CD4-positive, alpha-beta memory T cell (primary cell): ENCODE measurements at regions of chr12 and their contacts with region 1.

Region 1: GRCh38 chr12:108562348-108563135 is at the start of gene ISCU:
- DNase-seq: peak; percentile 97 to 100 (median 99)
- H3K4me3 ChIP-seq: peak within 1 kb of the TSS; percentile 87 to 90
- H3K4me3 Mint-ChIP-seq: peak within 1 kb of the TSS; percentile 100
- H3K27ac ChIP-seq: peak within 1 kb of the TSS; percentile 96
- H3K27ac Mint-ChIP-seq: peak within 1 kb of the TSS; percentile 99 to 100 (median 100)
- H3K4me1 ChIP-seq: peaks cover 65% of the 10 kb centered on the region
- H3K4me1 Mint-ChIP-seq: peaks cover 34 to 79% (median 54%) of the 10 kb centered on the region in 4 donors
- H3K27me3 ChIP-seq: no peaks in the 10 kb centered on the region
- H3K27me3 Mint-ChIP-seq: no peaks in the 10 kb centered on the region
- total RNA-seq, gene ISCU: 182 to 195 TPM

Region 2: GRCh38 chr12:107760809-107761501 is 801.6 kb before region 1 on chr12 and contains the start of gene PRDM4:
- CTCF ChIA-PET with region 1: no interaction called
- POLR2A ChIA-PET with region 1: no interaction called
- intact Hi-C with region 1: loop called (anchors 5 kb)
- DNase-seq: peak; percentile 87 to 94 (median 93)
- H3K4me3 ChIP-seq: peak within 1 kb of the TSS; percentile 77 to 82
- H3K4me3 Mint-ChIP-seq: peak within 1 kb of the TSS; percentile 89 to 95 (median 92)
- H3K27ac ChIP-seq: peak within 1 kb of the TSS; percentile 64
- H3K27ac Mint-ChIP-seq: peak within 1 kb of the TSS; percentile 90 to 98 (median 94)
- H3K4me1 ChIP-seq: peaks cover 41% of the 10 kb centered on the region
- H3K4me1 Mint-ChIP-seq: peaks cover 17 to 45% (median 26%) of the 10 kb centered on the region in 4 donors
- H3K27me3 ChIP-seq: no peaks in the 10 kb centered on the region
- H3K27me3 Mint-ChIP-seq: no peaks in the 10 kb centered on the region
- total RNA-seq, gene PRDM4: 35.8 to 38.3 TPM

Region 3: DNA sequence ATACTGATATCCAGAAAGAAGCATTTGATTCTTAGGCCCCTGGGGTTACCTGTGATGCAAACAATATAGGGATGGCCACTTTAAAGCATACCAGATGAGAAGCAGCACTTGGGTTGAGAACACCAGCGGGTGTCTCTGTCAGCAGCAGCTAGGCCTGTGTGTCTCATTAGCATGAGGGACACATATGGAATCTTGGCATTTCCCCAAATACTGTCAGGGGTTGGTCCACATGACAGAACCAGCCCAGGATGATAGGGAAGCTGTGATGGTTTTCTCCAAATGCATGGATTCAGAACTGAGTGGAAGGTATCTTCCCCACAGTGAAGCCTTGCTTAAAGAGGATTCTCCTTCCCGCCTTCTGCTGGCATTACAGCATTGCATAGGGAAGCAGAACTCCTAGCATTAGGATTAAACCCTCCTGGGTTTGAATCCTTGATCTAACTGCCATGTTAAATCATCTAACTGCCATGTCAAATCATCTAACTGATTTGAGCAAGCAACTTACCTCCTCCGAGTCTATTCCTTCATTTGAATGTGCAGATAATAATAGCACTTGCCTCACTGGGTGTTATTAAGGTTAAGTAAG is 545.0 kb before region 1 on chr12:
- CTCF ChIA-PET with region 1: no interaction called
- POLR2A ChIA-PET with region 1: no interaction called
- intact Hi-C with region 1: no loop called
- DNase-seq: no peak
- H3K4me3 ChIP-seq: no peak overlapping the region
- H3K4me3 Mint-ChIP-seq: no peak overlapping the region
- H3K27ac ChIP-seq: no peak overlapping the region
- H3K27ac Mint-ChIP-seq: no peak overlapping the region
- H3K4me1 ChIP-seq: no peaks in the 10 kb centered on the region
- H3K4me1 Mint-ChIP-seq: no peaks in the 10 kb centered on the region
- H3K27me3 ChIP-seq: no peaks in the 10 kb centered on the region
- H3K27me3 Mint-ChIP-seq: peaks cover 5 to 17% of the 10 kb centered on the region in 2 donors

Region 4: DNA sequence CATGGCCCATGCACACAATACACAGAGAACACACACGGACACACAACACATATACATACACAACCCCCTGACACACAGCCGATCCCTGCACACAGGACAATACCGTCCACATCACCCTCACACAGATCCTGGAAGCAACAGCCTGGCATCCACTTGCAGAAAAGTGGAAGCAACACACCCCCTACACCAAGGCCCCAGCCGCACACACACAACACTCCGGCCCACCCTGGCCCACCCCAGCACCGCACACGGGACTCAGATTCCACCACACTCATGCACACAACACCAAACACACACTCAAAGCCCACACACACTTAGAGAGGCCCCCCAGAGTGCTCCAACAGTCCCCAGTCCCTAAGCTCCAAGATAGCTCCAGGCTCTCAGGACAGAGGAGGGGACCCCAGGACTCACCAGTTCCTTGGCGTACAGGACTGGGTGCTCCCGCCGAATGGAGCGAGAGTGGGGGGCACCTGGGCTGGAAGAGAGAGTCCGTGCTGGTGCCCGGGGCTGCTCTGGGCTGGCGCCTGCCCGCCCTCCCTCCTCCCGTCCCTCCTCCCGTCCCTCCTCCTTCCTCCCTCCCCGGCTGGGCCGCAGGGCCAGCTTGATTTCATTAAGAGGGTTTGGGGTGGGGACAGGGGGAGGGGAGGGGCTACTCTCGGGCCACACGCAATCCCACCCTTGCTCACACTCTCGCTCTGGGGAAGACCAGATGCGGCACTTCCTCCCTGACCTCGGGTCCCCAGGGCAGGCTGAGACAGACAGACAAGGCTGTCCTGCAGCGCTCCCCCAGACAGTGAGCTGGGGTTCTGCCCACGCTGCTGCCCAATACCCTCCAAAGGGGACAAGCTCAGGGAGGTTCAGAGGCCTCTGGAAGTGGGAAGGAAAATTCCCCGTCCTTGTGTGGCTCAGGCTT is 35.3 kb after region 1 on chr12 and contains the start of gene TMEM119:
- CTCF ChIA-PET with region 1: no interaction called
- POLR2A ChIA-PET with region 1: no interaction called
- intact Hi-C with region 1: no loop called
- DNase-seq: no peak
- H3K4me3 ChIP-seq: no peak within 1 kb of the TSS
- H3K4me3 Mint-ChIP-seq: no peak within 1 kb of the TSS
- H3K27ac ChIP-seq: no peak within 1 kb of the TSS
- H3K27ac Mint-ChIP-seq: peak within 1 kb of the TSS in 3 of 7 donors; percentile 28 to 53 (median 46)
- H3K4me1 ChIP-seq: no peaks in the 10 kb centered on the region
- H3K4me1 Mint-ChIP-seq: no peaks in the 10 kb centered on the region
- H3K27me3 ChIP-seq: no peaks in the 10 kb centered on the region
- H3K27me3 Mint-ChIP-seq: no peaks in the 10 kb centered on the region
- total RNA-seq, gene TMEM119: 0.30 to 0.58 TPM

Region 5: GRCh38 chr12:108618079-108618952 is 55.8 kb after region 1 on chr12:
- CTCF ChIA-PET with region 1: interaction called, 339 read pairs
- POLR2A ChIA-PET with region 1: interaction called, 135 read pairs
- intact Hi-C with region 1: loop called (anchors 1 kb)
- DNase-seq: peak; percentile 73 to 78 (median 76)
- H3K4me3 ChIP-seq: no peak overlapping the region
- H3K4me3 Mint-ChIP-seq: peak overlapping the region in 6 of 8 donors; percentile 19 to 59 (median 48)
- H3K27ac ChIP-seq: peak overlapping the region; percentile 78
- H3K27ac Mint-ChIP-seq: peak overlapping the region; percentile 87 to 99 (median 95)
- H3K4me1 ChIP-seq: peaks cover 64% of the 10 kb centered on the region
- H3K4me1 Mint-ChIP-seq: peaks cover 47 to 78% (median 62%) of the 10 kb centered on the region in 4 donors
- H3K27me3 ChIP-seq: no peaks in the 10 kb centered on the region
- H3K27me3 Mint-ChIP-seq: no peaks in the 10 kb centered on the region

Region 6: DNA sequence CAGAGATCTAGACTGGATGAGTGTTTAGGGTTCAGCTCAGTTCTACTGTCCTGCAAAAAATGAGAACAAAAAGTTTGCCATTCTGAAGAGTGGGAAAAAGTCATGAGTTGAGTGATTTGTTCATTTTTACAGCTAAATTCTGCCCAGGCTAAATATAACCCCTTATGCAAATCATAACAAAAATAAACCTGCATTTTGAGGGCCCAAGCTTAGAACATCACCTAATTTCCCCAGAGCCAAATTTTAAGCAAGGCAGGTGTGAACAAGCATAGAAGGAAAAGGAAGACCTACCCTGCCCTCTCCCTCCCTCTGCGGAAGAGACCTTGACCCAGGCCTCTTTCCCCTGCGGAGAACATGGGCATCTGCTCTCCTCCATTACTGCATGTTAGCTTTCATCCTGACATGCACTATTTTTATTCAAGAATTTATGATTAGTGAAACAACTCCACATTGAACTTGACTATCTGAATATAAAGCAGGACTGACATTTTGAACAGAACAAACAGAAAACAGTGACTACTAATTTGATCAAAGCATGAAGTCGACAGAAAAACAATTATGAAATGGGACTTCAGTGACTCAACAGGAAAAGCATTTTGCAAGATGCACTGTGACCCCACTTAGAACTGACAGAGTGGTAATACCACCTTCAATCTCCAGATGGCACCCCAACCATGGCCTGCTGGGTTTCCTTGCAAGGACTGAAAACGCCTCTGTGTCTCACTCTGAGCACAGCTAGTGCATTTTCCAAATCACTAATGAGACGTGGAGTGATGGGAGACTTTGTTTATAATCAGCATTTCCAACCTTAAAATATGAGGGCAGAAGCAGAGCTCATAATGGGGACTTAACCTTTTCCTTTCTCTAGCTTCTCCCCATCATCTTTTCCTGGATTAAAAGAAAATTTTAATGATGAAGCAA is 102.1 kb after region 1 on chr12:
- CTCF ChIA-PET with region 1: interaction called, 61 read pairs
- POLR2A ChIA-PET with region 1: interaction called, 22 read pairs
- intact Hi-C with region 1: loop called (anchors 1 kb)
- DNase-seq: peak; percentile 79 to 85 (median 81)
- H3K4me3 ChIP-seq: no peak overlapping the region
- H3K4me3 Mint-ChIP-seq: peak overlapping the region in 1 of 8 donors; percentile 20
- H3K27ac ChIP-seq: no peak overlapping the region
- H3K27ac Mint-ChIP-seq: peak overlapping the region; percentile 78 to 93 (median 86)
- H3K4me1 ChIP-seq: peaks cover 14% of the 10 kb centered on the region
- H3K4me1 Mint-ChIP-seq: peaks cover 9 to 10% (median 9%) of the 10 kb centered on the region in 4 donors
- H3K27me3 ChIP-seq: no peaks in the 10 kb centered on the region
- H3K27me3 Mint-ChIP-seq: no peaks in the 10 kb centered on the region

Region 7: GRCh38 chr12:108803428-108804105 is 241.0 kb after region 1 on chr12:
- CTCF ChIA-PET with region 1: interaction called, 134 read pairs
- POLR2A ChIA-PET with region 1: interaction called, 6 read pairs
- intact Hi-C with region 1: loop called (anchors 1 kb)
- DNase-seq: peak; percentile 68 to 79 (median 75)
- H3K4me3 ChIP-seq: no peak overlapping the region
- H3K4me3 Mint-ChIP-seq: no peak overlapping the region
- H3K27ac ChIP-seq: no peak overlapping the region
- H3K27ac Mint-ChIP-seq: peak overlapping the region in 3 of 7 donors; percentile 43 to 73 (median 61)
- H3K4me1 ChIP-seq: no peaks in the 10 kb centered on the region
- H3K4me1 Mint-ChIP-seq: peaks cover 0 to 5% (median under 1%) of the 10 kb centered on the region in 4 donors
- H3K27me3 ChIP-seq: no peaks in the 10 kb centered on the region
- H3K27me3 Mint-ChIP-seq: no peaks in the 10 kb centered on the region

Region 8: DNA sequence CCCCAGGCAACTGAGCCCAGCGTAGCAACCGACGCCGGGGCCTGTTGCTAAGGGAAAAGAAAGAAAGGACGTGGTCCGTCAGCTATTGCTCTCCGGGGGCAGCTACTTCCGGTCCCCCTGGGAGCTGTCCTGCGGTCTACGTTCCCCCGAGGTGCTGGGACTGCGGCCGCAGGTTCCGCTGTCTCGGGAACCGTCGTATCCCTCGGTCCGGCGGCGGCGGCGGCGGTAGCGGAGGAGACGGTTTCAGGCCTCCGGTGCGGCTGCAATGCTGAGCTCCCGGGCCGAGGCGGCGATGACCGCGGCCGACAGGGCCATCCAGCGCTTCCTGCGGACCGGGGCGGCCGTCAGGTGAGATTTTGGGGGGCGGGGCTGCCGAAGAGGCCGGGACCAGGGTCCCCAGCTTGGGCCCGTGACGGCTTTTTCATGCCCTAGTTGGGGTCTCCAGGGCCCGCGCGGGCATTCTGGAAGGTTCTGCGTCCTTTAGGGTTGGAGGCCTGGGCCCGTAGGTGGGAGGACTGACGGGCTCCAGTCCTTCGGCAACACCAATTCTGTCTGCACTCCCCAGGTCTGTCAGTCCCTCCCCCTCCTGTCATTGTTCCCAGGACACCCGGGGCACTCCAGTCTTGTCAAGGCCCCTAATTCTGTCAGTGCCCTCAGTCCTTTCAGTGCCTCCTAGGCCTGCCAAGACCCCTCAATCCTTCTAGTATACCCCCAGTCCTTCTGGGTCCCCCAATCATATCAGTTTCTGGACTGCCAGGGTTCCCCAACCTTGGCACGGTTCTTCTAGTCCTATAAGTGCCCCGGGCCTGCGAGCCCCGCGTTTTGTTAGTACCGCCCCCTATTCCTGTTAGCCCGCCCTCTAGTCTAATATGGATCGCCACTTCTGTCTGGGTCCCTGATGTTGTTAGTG is 490.1 kb after region 1 on chr12 and contains the start of gene USP30:
- CTCF ChIA-PET with region 1: interaction called, 3 read pairs
- POLR2A ChIA-PET with region 1: interaction called, 8 read pairs
- intact Hi-C with region 1: loop called (anchors 2 kb)
- DNase-seq: peak; percentile 75 to 83 (median 79)
- H3K4me3 ChIP-seq: peak within 1 kb of the TSS; percentile 87 to 96
- H3K4me3 Mint-ChIP-seq: peak within 1 kb of the TSS; percentile 93 to 100 (median 96)
- H3K27ac ChIP-seq: peak within 1 kb of the TSS; percentile 85
- H3K27ac Mint-ChIP-seq: peak within 1 kb of the TSS; percentile 87 to 100 (median 98)
- H3K4me1 ChIP-seq: peaks cover 18% of the 10 kb centered on the region
- H3K4me1 Mint-ChIP-seq: peaks cover 10 to 27% (median 17%) of the 10 kb centered on the region in 4 donors
- H3K27me3 ChIP-seq: no peaks in the 10 kb centered on the region
- H3K27me3 Mint-ChIP-seq: no peaks in the 10 kb centered on the region
- total RNA-seq, gene USP30: 8.1 to 14.2 TPM

Region 9: GRCh38 chr12:109477185-109477962 is 914.8 kb after region 1 on chr12 and contains the starts of genes KCTD10 and UBE3B:
- CTCF ChIA-PET with region 1: no interaction called
- POLR2A ChIA-PET with region 1: no interaction called
- intact Hi-C with region 1: loop called (anchors 2 kb)
- DNase-seq: peak; percentile 85 to 89 (median 87)
- H3K4me3 ChIP-seq: peak within 1 kb of the TSS; percentile 93 to 97
- H3K4me3 Mint-ChIP-seq: peak within 1 kb of the TSS; percentile 97 to 99 (median 97)
- H3K27ac ChIP-seq: peak within 1 kb of the TSS; percentile 87
- H3K27ac Mint-ChIP-seq: peak within 1 kb of the TSS; percentile 98 to 100 (median 99)
- H3K4me1 ChIP-seq: peaks cover 38% of the 10 kb centered on the region
- H3K4me1 Mint-ChIP-seq: peaks cover 31 to 67% (median 37%) of the 10 kb centered on the region in 4 donors
- H3K27me3 ChIP-seq: no peaks in the 10 kb centered on the region
- H3K27me3 Mint-ChIP-seq: no peaks in the 10 kb centered on the region
- total RNA-seq, gene KCTD10: 29.2 to 31.9 TPM
- total RNA-seq, gene UBE3B: 55.8 to 58.1 TPM